CD4-positive, alpha-beta memory T cell (primary cell): ENCODE measurements at regions of chr1 and their contacts with region 1.

Region 1: DNA sequence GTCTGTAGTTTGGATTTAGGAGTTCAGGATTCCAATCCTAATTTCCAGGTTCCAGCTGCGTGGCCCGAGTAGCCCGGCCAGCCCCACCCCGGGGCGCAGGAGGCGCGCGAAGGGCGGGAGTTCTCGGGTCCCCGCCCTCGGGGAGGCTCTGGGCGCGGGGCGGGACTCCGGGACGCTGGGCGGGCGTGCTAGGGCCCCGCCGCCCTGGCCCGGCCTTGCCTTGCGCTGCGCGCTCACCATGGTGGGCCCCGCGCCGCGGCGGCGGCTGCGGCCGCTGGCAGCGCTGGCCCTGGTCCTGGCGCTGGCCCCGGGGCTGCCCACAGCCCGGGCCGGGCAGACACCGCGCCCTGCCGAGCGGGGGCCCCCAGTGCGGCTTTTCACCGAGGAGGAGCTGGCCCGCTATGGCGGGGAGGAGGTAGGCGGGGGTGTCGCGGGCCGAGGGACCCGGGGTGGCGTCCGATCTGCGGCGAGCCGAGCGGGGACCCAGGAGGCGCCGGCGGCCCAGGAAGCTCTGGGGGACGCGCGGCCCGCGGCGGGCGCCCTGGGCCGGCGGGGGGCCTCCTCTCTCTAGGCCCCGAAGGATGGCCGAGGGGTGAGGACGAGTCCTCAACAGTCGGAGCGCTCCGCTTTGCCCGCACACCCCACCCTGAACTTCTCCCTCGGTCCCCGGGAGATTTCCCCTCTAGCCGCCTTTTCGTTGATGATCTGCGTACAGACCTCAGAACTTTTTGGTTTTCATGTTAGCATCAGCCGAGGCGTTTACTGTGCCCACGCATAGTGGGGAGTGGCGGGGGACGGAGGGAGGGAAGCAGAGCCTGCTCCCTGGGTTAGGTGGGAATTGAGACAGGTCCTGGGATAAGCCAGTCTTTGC is at the start of gene NENF:
- DNase-seq: peak; percentile 68 to 79 (median 72)
- H3K4me3 ChIP-seq: peak within 1 kb of the TSS; percentile 56 to 63
- H3K4me3 Mint-ChIP-seq: peak within 1 kb of the TSS; percentile 77 to 86 (median 83)
- H3K27ac ChIP-seq: peak within 1 kb of the TSS; percentile 29
- H3K27ac Mint-ChIP-seq: peak within 1 kb of the TSS in 6 of 7 donors; percentile 31 to 86 (median 74)
- H3K4me1 ChIP-seq: peaks cover 20% of the 10 kb centered on the region
- H3K4me1 Mint-ChIP-seq: peaks cover 10 to 35% (median 18%) of the 10 kb centered on the region in 4 donors
- H3K27me3 ChIP-seq: no peaks in the 10 kb centered on the region
- H3K27me3 Mint-ChIP-seq: peaks cover 1 to 3% of the 10 kb centered on the region in 2 donors
- total RNA-seq, gene NENF: 18.7 to 21.0 TPM

Region 2: GRCh38 chr1:211675230-211676105 is 757.5 kb before region 1 on chr1 and contains the start of gene NEK2:
- CTCF ChIA-PET with region 1: no interaction called
- POLR2A ChIA-PET with region 1: no interaction called
- intact Hi-C with region 1: loop called (anchors 10 kb)
- DNase-seq: peak; percentile 83 to 93 (median 86)
- H3K4me3 ChIP-seq: peak within 1 kb of the TSS; percentile 44 to 83
- H3K4me3 Mint-ChIP-seq: peak within 1 kb of the TSS; percentile 89 to 94 (median 92)
- H3K27ac ChIP-seq: peak within 1 kb of the TSS; percentile 49
- H3K27ac Mint-ChIP-seq: peak within 1 kb of the TSS; percentile 81 to 92 (median 86)
- H3K4me1 ChIP-seq: peaks cover 12% of the 10 kb centered on the region
- H3K4me1 Mint-ChIP-seq: peaks cover 6 to 22% (median 12%) of the 10 kb centered on the region in 4 donors
- H3K27me3 ChIP-seq: no peaks in the 10 kb centered on the region
- H3K27me3 Mint-ChIP-seq: no peaks in the 10 kb centered on the region
- total RNA-seq, gene NEK2: not detected

Region 3: DNA sequence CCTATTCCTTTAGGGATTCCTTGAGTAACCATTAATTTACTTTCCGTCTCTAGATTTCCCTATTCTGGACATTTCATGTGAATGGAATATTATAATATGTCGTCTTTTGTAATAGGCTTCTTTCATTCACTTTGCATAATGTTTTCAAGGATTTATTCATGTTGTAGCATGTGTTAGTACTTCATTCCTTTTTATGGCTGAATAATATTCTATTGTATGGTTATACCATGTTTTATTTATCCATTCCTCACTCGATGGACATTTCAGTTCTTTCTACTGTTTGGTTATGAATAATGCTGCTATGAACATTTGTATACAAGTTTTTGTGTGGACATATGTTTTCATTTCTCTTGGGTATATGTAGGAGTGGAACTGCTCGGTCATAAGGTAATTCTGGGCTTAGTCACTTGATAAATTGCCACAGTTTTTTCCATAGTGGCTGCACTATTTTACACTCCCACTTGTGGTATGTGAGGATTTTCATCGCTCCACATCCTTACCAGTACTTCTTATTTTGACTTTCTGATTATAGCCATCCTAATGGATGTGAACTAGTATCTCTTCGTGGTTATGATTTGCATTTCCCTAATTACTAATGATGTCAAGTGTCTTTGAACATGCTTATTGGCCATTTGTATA is 130.1 kb before region 1 on chr1:
- CTCF ChIA-PET with region 1: no interaction called
- POLR2A ChIA-PET with region 1: no interaction called
- intact Hi-C with region 1: no loop called
- DNase-seq: no peak
- H3K4me3 ChIP-seq: no peak overlapping the region
- H3K4me3 Mint-ChIP-seq: peak overlapping the region in 4 of 8 donors; percentile 2 to 37 (median 16)
- H3K27ac ChIP-seq: no peak overlapping the region
- H3K27ac Mint-ChIP-seq: peak overlapping the region in 2 of 7 donors; percentile 1 to 19
- H3K4me1 ChIP-seq: peaks cover 46% of the 10 kb centered on the region
- H3K4me1 Mint-ChIP-seq: peaks cover 38 to 71% (median 57%) of the 10 kb centered on the region in 4 donors
- H3K27me3 ChIP-seq: no peaks in the 10 kb centered on the region
- H3K27me3 Mint-ChIP-seq: no peaks in the 10 kb centered on the region

Region 4: DNA sequence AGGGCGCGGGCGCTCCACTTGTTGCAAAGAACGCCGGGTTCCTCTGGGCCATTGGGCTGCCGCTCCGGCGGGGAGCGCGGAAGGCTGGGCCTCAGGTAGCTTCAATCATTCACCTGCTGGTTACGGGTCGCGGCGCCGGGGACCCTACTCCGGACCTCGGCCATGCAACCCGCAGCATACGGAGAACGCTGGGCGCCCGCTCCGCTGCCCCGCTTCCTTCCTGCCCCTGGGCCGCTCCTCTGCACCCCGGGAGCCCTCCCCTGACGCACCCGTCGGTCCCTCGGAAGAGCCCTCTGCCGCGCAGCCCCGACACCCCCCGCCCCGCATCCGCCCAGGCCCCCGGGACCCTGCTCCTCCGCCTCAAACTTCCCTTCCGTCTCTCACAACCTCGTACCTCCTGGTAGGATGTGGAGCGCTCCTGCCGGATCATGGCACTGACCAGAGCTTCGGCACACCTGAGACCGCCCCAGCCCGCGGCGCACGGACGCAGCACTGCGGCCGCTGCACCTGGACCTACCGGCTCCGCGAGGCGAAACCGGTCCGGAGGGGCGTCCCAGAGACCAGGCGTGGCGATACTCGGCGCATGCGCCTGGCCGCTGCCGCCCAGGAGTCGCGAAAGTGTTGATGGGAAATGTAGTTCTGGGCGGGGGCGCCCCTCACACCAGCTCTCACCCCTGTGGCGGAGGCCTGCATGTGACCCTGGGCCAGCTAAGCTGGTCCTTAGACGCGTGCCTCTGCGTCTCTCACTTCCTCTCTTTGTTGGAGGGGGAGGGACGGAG is 18.4 kb before region 1 on chr1 and contains the start of gene PACC1:
- CTCF ChIA-PET with region 1: interaction called, 3 read pairs
- POLR2A ChIA-PET with region 1: interaction called, 7 read pairs
- intact Hi-C with region 1: loop called (anchors 1 kb)
- DNase-seq: peak; percentile 87 to 89 (median 88)
- H3K4me3 ChIP-seq: peak within 1 kb of the TSS; percentile 90 to 92
- H3K4me3 Mint-ChIP-seq: peak within 1 kb of the TSS; percentile 87 to 97 (median 96)
- H3K27ac ChIP-seq: peak within 1 kb of the TSS; percentile 71
- H3K27ac Mint-ChIP-seq: peak within 1 kb of the TSS; percentile 88 to 96 (median 95)
- H3K4me1 ChIP-seq: peaks cover 19% of the 10 kb centered on the region
- H3K4me1 Mint-ChIP-seq: peaks cover 16 to 38% (median 24%) of the 10 kb centered on the region in 4 donors
- H3K27me3 ChIP-seq: no peaks in the 10 kb centered on the region
- H3K27me3 Mint-ChIP-seq: no peaks in the 10 kb centered on the region
- total RNA-seq, gene PACC1: 9.7 to 12.3 TPM

Region 5: DNA sequence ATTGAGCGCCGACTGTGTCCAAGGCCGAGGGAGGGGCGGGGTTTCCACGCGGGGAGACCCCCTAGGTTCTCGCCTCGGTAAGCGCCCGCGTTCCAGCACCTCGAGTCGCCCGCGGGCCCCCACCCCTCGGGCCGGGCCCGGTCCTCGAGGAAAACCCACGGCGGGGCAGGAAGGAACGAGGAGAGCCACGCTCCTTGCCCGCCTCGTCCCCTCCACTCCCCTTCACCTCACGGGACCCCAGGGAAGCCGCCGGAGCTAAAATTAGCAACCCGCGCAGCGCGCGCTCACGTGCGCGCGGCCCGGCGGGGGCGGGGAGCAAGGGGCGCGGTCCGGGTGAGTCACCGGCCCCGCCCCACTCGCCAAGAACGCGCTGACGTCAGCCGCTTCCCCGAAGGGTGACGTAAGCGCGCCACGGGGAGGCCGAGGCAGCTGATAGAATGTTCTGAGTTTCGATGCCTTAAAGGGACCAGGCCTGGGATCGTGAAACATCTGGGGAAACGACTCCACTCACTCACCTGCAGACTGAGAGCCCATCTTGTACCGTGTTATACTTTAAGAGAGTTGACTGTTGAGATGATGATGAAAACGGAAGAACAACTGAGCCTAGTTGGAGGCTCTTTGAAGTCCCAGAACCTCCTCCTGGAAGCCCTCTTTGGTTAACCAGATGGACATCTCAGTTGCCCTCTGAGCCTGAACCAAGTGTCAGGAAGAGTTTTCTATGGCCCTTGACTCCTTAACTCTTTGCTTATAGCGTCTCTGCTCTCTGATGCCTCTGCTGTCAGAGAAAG is 125.9 kb after region 1 on chr1:
- CTCF ChIA-PET with region 1: no interaction called
- POLR2A ChIA-PET with region 1: no interaction called
- intact Hi-C with region 1: loop called (anchors 5 kb)
- DNase-seq: peak; percentile 90 to 92 (median 91)
- H3K4me3 ChIP-seq: peak overlapping the region in 1 of 2 donors; percentile 64
- H3K4me3 Mint-ChIP-seq: peak overlapping the region; percentile 83 to 93 (median 86)
- H3K27ac ChIP-seq: peak overlapping the region; percentile 79
- H3K27ac Mint-ChIP-seq: peak overlapping the region; percentile 81 to 100 (median 99)
- H3K4me1 ChIP-seq: peaks cover 11% of the 10 kb centered on the region
- H3K4me1 Mint-ChIP-seq: peaks cover 2 to 16% (median 8%) of the 10 kb centered on the region in 4 donors
- H3K27me3 ChIP-seq: no peaks in the 10 kb centered on the region
- H3K27me3 Mint-ChIP-seq: peaks cover 4% of the 10 kb centered on the region in 2 donors